ENCODE measurements at regions of chr6 and their contacts with region 1.

Region 1: DNA sequence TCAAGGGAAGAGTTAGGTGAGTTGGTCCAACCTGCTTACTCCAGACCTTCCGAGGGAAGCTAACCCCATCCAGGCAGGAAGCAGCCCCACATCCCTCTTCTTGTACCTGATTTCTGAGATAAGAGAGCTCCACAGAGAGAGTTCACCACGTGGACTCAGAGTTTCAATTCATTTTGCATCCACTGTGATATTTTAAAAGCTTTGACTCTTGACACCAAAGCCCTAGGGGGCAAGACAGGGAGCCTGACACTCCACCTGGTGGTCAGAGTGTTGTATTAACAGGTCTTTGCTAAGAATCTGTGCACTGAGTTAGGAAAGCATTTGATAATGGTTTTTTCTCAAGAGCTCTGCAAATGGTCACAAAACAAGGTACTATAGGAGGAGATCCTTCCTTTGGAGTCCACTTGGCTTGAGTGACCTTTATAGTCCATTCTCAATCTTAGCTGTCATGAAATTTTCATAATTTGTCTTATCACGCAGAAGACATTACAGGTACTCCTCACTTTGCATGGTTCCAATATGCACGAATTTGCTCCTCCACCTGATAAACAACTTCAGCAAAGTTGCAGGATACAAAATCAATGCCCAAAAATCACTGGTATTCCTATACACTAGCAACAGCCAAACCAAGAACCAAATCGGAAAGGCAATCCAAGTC is 56.2 kb upstream of the RIPOR2 start:
- DNase-seq: peak; percentile 53 to 85 (median 70)
- H3K4me3 ChIP-seq: peak overlapping the region; percentile 30
- H3K4me3 Mint-ChIP-seq: peak overlapping the region in 6 of 7 donors; percentile 33 to 79 (median 57)
- H3K27ac ChIP-seq: peak overlapping the region; percentile 6
- H3K27ac Mint-ChIP-seq: peak overlapping the region; percentile 77 to 95 (median 86)
- H3K4me1 ChIP-seq: peaks cover 43% of the 10 kb centered on the region
- H3K4me1 Mint-ChIP-seq: peaks cover 63 to 86% (median 83%) of the 10 kb centered on the region in 3 donors
- H3K27me3 ChIP-seq: no peaks in the 10 kb centered on the region
- H3K27me3 Mint-ChIP-seq: no peaks in the 10 kb centered on the region

Region 2: DNA sequence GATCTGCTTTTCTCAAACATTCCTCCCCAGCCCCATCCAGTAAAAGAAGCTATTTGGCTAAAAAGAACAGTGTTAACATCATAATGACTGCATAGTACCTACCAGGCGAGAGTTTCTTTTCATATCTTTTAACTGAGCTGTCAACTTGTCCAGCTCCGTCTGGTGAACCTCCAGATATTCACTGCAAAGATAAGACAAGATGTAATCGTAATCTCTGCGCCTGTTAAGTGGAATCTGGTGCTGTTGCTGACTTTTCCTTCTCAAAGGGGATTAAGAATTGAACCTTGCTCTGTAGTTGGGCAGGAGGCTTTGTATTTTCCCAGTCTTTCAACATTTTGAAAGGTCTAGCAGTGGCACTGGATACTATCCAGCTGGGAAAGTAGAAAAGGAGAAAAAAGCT is 119.2 kb before region 1 on chr6:
- CTCF ChIA-PET with region 1: interaction called, 10 read pairs
- POLR2A ChIA-PET with region 1: no interaction called
- DNase-seq: no peak
- H3K4me3 ChIP-seq: no peak overlapping the region
- H3K4me3 Mint-ChIP-seq: no peak overlapping the region
- H3K27ac ChIP-seq: no peak overlapping the region
- H3K27ac Mint-ChIP-seq: peak overlapping the region in 7 of 8 donors; percentile 9 to 85 (median 73)
- H3K4me1 ChIP-seq: peaks cover 58% of the 10 kb centered on the region
- H3K4me1 Mint-ChIP-seq: peaks cover 62 to 73% (median 72%) of the 10 kb centered on the region in 3 donors
- H3K27me3 ChIP-seq: no peaks in the 10 kb centered on the region
- H3K27me3 Mint-ChIP-seq: no peaks in the 10 kb centered on the region

Region 3: GRCh38 chr6:24910961-24911712 is 80.8 kb before region 1 on chr6:
- CTCF ChIA-PET with region 1: interaction called, 87 read pairs
- POLR2A ChIA-PET with region 1: interaction called, 7 read pairs
- DNase-seq: peak; percentile 20 to 63 (median 47)
- H3K4me3 ChIP-seq: peak overlapping the region; percentile 61
- H3K4me3 Mint-ChIP-seq: peak overlapping the region; percentile 89 to 98 (median 94)
- H3K27ac ChIP-seq: peak overlapping the region; percentile 51
- H3K27ac Mint-ChIP-seq: peak overlapping the region; percentile 90 to 99 (median 98)
- H3K4me1 ChIP-seq: peaks cover 95% of the 10 kb centered on the region
- H3K4me1 Mint-ChIP-seq: peaks cover 96 to 97% (median 97%) of the 10 kb centered on the region in 3 donors
- H3K27me3 ChIP-seq: no peaks in the 10 kb centered on the region
- H3K27me3 Mint-ChIP-seq: no peaks in the 10 kb centered on the region

Region 4: GRCh38 chr6:24933868-24934401 is 58.0 kb before region 1 on chr6:
- CTCF ChIA-PET with region 1: interaction called, 180 read pairs
- POLR2A ChIA-PET with region 1: interaction called, 60 read pairs
- DNase-seq: peak in 4 of 5 donors; percentile 39 to 75 (median 61)
- H3K4me3 ChIP-seq: peak overlapping the region; percentile 72
- H3K4me3 Mint-ChIP-seq: peak overlapping the region; percentile 85 to 99 (median 99)
- H3K27ac ChIP-seq: peak overlapping the region; percentile 64
- H3K27ac Mint-ChIP-seq: peak overlapping the region; percentile 84 to 97 (median 90)
- H3K4me1 ChIP-seq: peaks cover 45% of the 10 kb centered on the region
- H3K4me1 Mint-ChIP-seq: peaks cover 54 to 65% (median 64%) of the 10 kb centered on the region in 3 donors
- H3K27me3 ChIP-seq: no peaks in the 10 kb centered on the region
- H3K27me3 Mint-ChIP-seq: no peaks in the 10 kb centered on the region

Region 5: DNA sequence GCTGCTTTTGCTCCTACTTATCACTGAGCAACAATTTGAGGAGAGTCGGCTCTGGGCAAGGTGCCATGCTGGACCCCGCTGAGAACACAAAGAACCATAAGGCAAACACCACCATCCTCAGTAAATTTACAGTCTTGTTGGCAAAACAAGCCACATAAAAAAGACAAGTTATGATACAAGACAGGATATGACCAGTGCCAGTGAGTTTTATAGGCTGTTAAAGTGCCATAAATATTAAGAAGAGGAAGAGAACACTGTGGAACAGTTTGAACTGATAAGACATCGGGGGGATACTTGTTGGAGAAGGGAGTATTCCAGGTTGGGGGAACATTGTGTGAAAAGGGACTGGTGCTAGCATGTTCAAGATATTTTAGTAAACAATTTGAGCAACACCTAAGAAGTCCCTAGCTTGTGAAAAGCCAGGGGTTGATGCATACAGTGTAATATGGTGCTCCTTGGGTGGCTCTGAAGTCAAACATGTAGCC is 30.9 kb before region 1 on chr6:
- CTCF ChIA-PET with region 1: interaction called, 22 read pairs
- POLR2A ChIA-PET with region 1: no interaction called
- DNase-seq: peak in 2 of 5 donors; percentile 40 to 70
- H3K4me3 ChIP-seq: peak overlapping the region; percentile 15
- H3K4me3 Mint-ChIP-seq: peak overlapping the region in 6 of 7 donors; percentile 37 to 89 (median 70)
- H3K27ac ChIP-seq: no peak overlapping the region
- H3K27ac Mint-ChIP-seq: peak overlapping the region; percentile 55 to 98 (median 92)
- H3K4me1 ChIP-seq: peaks cover 82% of the 10 kb centered on the region
- H3K4me1 Mint-ChIP-seq: peaks cover 80 to 89% (median 89%) of the 10 kb centered on the region in 3 donors
- H3K27me3 ChIP-seq: no peaks in the 10 kb centered on the region
- H3K27me3 Mint-ChIP-seq: peaks cover 0 to 3% of the 10 kb centered on the region in 2 donors

Region 6: GRCh38 chr6:24980507-24981387 is 11.2 kb before region 1 on chr6:
- CTCF ChIA-PET with region 1: interaction called, 46 read pairs
- POLR2A ChIA-PET with region 1: interaction called, 3 read pairs
- DNase-seq: no peak
- H3K4me3 ChIP-seq: no peak overlapping the region
- H3K4me3 Mint-ChIP-seq: peak overlapping the region in 4 of 7 donors; percentile 20 to 79 (median 30)
- H3K27ac ChIP-seq: no peak overlapping the region
- H3K27ac Mint-ChIP-seq: peak overlapping the region; percentile 45 to 92 (median 71)
- H3K4me1 ChIP-seq: peaks cover 51% of the 10 kb centered on the region
- H3K4me1 Mint-ChIP-seq: peaks cover 53 to 81% (median 80%) of the 10 kb centered on the region in 3 donors
- H3K27me3 ChIP-seq: no peaks in the 10 kb centered on the region
- H3K27me3 Mint-ChIP-seq: no peaks in the 10 kb centered on the region

Region 7: DNA sequence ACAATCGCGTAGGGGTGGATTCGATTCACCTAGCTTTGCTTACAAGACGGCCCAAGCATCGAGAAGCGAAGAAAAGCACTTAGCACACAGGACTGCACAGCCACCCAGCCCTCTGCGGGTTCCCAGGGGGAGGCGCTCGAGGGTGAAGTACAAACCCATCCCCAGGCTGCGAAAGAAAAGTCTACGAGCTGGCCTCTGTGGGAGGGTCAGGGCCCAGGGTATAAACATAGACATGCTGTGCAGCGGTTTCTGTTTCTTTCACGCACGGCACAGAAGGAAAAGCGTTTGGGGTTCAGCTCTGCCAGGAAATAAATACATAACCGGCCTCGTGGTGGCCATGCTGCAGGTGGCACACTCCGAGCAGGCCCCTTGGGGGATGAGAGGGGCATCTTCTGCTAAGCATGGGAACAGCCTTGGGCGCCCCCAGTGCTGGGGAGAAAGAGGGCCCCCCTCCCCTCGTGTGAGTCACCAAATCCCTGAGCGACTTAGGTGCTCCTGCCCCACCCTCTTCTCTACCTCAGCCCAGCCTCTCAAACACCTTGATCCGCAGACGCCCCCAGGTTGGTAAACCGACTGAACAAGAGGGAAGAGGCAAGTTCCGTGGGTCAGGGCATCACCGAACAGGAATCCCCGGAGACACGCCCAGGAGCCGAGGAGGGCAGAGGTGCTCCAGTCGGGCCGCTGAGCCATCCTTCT is 35.4 kb after region 1 on chr6:
- CTCF ChIA-PET with region 1: interaction called, 15 read pairs
- POLR2A ChIA-PET with region 1: interaction called, 5 read pairs
- DNase-seq: peak; percentile 63 to 85 (median 67)
- H3K4me3 ChIP-seq: peak overlapping the region; percentile 44
- H3K4me3 Mint-ChIP-seq: peak overlapping the region; percentile 63 to 90 (median 81)
- H3K27ac ChIP-seq: peak overlapping the region; percentile 11
- H3K27ac Mint-ChIP-seq: peak overlapping the region; percentile 78 to 96 (median 88)
- H3K4me1 ChIP-seq: peaks cover 35% of the 10 kb centered on the region
- H3K4me1 Mint-ChIP-seq: peaks cover 58 to 74% (median 61%) of the 10 kb centered on the region in 3 donors
- H3K27me3 ChIP-seq: no peaks in the 10 kb centered on the region
- H3K27me3 Mint-ChIP-seq: no peaks in the 10 kb centered on the region

Measured in CD8-positive, alpha-beta memory T cell (primary cell).